Right ventricle myocardium superior (tissue), 1 donor: ENCODE measurements at regions of chr1 and their contacts with region 1.

Region 1: GRCh38 chr1:147389532-147390524 is 147.3 kb downstream of the CHD1L start:
- DNase-seq: no peak
- ATAC-seq: peak; percentile 22

Region 2: GRCh38 chr1:147287133-147287865 is 102.5 kb before region 1 on chr1:
- intact Hi-C with region 1: loop called (anchors 10 kb)
- DNase-seq: no peak
- ATAC-seq: no peak